Mammary epithelial cell (primary cell): ENCODE measurements at regions of chr2 and their contacts with region 1.

Region 1: DNA sequence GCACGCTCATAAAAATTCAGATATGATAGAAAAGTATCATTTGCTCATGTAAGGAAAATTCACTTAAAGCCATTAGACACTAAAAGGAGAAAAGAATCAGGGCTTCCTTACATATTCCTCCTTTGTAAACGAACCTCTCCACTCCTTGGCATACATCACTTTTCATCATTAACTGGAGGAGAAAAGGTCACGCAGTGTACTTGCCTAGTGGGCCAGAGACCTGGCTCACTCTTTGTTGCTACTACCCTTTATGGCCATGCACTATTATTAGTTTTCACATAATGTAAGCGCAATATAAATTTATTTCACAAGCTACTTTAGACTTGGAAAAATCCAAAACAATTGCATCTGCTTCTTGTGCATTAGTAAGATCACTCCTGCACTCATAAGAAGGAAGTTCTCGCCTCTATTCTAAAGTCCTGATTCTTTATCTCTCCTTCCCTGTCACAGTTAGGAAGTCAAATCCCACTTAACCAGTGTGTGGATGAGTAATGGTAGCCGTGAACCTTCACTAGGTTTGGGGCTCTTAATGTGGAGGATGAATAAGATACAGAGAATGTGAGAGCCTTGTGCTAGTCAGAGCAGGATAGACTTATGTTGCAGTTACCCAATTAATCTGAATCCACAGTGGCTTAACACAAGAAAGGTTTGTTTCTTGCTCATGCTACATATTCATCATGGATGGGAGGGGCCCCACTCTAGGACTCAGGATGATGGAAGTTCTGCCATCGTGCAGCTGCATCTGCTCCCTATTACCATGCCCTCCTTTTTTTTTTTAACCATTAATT is 115.0 kb upstream of the GLS start:
- DNase-seq: peak; percentile 94
- H3K4me3 ChIP-seq: no peak overlapping the region
- H3K27ac ChIP-seq: peak overlapping the region; percentile 41
- H3K4me1 ChIP-seq: peaks cover 27% of the 10 kb centered on the region
- H3K27me3 ChIP-seq: no peaks in the 10 kb centered on the region
- CTCF ChIP-seq: no peak

Region 2: DNA sequence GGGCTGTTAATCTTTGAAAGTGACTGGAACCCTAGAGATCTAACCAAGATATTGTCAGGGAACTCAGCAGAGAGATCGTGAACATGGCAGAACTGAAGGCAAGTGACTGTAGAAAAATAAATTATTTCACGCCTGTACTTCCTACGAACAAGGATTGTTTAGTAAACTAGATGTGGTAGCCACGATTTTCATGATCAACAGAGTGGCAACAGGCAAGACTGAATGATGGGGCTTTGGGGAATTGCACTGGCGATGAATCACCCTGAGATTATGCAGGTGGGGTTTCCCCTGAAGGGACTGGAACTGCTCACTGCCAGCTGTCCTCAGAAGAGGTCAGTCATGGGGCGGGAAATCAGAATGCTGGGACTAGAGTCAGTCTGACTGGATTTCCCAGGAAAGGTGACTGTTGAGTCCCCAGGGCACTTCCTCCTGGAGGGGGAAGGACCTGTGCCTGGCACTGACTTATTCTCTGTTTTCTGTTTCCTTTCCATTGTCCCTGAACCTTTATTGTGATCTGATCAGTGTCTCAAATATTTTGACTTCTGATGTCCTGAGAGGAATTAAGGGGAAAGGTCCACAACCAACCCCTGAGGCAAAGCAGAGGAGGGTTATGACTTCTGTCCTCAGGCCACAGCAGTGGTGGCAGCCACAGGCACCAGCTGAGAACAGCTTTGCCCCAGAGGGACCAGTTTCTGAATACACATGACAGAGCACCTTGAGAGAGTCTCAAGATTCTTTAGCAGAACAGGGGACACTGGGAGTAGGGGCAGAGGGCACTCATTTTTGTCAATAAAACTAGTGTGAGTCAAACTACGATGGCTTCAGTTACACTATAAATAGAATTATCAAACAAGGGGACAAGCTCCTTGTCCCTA is 46.7 kb before region 1 on chr2:
- CTCF ChIA-PET with region 1: no interaction called
- dilution Hi-C with region 1: no loop called
- in situ Hi-C with region 1: no loop called
- intact Hi-C with region 1: loop called (anchors 2 kb)
- DNase-seq: peak; percentile 94
- H3K4me3 ChIP-seq: no peak overlapping the region
- H3K27ac ChIP-seq: peak overlapping the region; percentile 63
- H3K4me1 ChIP-seq: peaks cover 52% of the 10 kb centered on the region
- H3K27me3 ChIP-seq: no peaks in the 10 kb centered on the region
- CTCF ChIP-seq: no peak

Region 3: DNA sequence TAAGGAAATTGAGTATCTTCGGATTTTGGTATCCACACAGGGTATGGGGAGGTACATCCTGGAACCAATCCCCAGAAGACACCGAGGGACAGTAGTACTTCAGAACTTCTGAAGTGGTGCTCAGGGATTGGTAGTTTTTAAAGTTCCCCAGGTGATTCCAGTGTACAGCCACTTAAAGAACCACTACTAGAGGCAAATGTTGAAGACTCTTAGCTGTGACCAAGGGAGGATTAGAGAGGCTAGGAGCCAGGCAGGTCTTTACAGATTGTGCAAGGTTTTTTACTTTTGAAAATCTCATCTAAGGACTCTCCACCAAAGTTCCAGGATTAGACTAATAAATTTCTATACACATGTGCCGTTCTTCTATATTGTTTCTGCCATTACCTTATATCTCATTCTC is 62.1 kb after region 1 on chr2:
- CTCF ChIA-PET with region 1: no interaction called
- dilution Hi-C with region 1: no loop called
- in situ Hi-C with region 1: no loop called
- intact Hi-C with region 1: no loop called
- DNase-seq: no peak
- H3K4me3 ChIP-seq: no peak overlapping the region
- H3K27ac ChIP-seq: no peak overlapping the region
- H3K4me1 ChIP-seq: no peaks in the 10 kb centered on the region
- H3K27me3 ChIP-seq: no peaks in the 10 kb centered on the region
- CTCF ChIP-seq: no peak